Ovary (tissue), 10 donors: ENCODE measurements at regions of chr12 and their contacts with region 1.

Region 1: DNA sequence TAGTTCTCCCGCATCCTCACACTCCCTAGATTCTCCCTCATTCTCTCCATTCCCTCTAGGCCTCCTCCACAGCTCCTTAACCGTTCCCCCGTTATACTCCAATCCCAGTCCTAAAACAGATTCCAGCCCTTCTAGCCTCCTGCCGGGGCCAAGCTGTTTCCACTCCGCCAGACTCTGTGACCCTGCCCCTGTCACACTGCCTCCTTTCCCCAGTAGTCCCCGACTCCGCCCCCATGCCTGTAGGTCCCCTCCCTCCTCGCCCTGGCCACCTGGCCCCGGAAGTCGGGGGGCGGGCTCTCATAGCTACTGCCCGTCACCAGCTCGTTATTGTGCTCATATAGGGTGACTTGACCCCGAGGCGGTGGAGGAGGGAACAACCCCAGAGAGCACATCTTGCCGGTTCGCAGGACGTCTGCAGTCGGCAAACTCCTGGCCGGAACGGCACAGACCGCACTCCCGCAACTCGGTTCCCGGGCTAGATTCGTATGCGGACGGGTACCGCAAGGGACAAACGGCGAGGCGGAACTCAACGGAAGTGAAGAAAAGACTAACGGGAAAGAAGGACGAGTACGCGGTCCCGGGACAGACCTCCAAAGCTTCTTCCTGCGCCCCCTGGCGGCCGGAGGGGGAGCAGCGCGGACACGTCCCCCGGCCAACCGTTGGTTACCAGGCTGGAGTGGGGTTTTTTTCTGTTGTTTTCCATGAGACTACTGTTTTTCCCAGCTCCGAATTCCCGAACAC is at the start of gene AAAS:
- DNase-seq: peak; percentile 92 to 96 (median 95)
- H3K4me3 ChIP-seq: peak within 1 kb of the TSS; percentile 69
- H3K27ac ChIP-seq: peak within 1 kb of the TSS; percentile 71 to 76
- H3K4me1 ChIP-seq: peaks cover 9% of the 10 kb centered on the region
- H3K27me3 ChIP-seq: no peaks in the 10 kb centered on the region
- CTCF ChIP-seq: peak; percentile 97 to 99 (median 98)
- EP300 ChIP-seq: peak; percentile 10
- POLR2A ChIP-seq: peak; percentile 46
- total RNA-seq, gene AAAS: 23.4 to 47.6 (median 43.0) TPM

Region 2: GRCh38 chr12:53295891-53296219 is 25.4 kb before region 1 on chr12:
- intact Hi-C with region 1: loop called in 1 of 4 experiments (anchors 2 kb)
- DNase-seq: no peak
- H3K4me3 ChIP-seq: peak overlapping the region; percentile 61
- H3K27ac ChIP-seq: peak overlapping the region; percentile 45 to 77
- H3K4me1 ChIP-seq: peaks cover 7% of the 10 kb centered on the region
- H3K27me3 ChIP-seq: no peaks in the 10 kb centered on the region
- CTCF ChIP-seq: no peak
- EP300 ChIP-seq: no peak
- POLR2A ChIP-seq: no peak

Region 3: DNA sequence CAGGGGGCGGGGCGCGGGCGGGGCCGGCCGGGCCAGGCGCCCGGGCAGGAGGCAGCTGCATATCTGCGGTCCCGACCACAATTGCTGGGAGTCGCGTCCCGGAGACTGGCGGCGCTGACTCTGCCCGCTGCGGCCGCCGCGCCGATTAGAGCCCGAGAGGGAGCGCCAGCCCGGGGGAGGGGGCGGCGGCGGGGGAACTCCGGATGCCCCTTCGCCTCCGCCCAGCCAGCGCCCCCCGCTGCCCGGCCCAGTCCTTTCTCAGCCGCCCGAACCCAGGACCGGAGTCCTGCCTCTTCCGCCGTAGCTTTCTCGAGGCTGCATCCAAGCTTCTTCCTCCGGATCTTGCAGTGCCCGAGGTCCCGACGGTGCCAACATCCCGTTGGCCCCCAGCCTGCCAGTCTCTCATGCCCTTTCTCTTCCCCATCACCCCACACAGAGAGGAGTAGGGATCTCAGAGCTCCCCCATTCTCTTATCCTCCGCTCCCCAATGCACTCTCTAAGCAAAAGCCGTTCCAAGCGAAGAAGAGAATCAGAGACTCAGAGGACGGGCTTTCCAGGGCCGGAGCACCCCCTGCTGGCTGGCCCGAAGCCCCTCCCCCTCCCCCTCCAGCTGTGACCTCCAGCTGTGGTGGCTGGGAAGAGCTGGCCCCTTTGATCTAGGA is 23.7 kb after region 1 on chr12:
- intact Hi-C with region 1: loop called in 2 of 4 experiments (anchors 1 to 2 kb)
- DNase-seq: peak; percentile 80 to 88 (median 85)
- H3K4me3 ChIP-seq: peak overlapping the region; percentile 50
- H3K27ac ChIP-seq: peak overlapping the region; percentile 46 to 73
- H3K4me1 ChIP-seq: peaks cover 3% of the 10 kb centered on the region
- H3K27me3 ChIP-seq: no peaks in the 10 kb centered on the region
- CTCF ChIP-seq: peak; percentile 74 to 83 (median 76)
- EP300 ChIP-seq: no peak
- POLR2A ChIP-seq: no peak